CD4-positive, alpha-beta T cell (primary cell): ENCODE measurements at regions of chr5 and their contacts with region 1.

Region 1: DNA sequence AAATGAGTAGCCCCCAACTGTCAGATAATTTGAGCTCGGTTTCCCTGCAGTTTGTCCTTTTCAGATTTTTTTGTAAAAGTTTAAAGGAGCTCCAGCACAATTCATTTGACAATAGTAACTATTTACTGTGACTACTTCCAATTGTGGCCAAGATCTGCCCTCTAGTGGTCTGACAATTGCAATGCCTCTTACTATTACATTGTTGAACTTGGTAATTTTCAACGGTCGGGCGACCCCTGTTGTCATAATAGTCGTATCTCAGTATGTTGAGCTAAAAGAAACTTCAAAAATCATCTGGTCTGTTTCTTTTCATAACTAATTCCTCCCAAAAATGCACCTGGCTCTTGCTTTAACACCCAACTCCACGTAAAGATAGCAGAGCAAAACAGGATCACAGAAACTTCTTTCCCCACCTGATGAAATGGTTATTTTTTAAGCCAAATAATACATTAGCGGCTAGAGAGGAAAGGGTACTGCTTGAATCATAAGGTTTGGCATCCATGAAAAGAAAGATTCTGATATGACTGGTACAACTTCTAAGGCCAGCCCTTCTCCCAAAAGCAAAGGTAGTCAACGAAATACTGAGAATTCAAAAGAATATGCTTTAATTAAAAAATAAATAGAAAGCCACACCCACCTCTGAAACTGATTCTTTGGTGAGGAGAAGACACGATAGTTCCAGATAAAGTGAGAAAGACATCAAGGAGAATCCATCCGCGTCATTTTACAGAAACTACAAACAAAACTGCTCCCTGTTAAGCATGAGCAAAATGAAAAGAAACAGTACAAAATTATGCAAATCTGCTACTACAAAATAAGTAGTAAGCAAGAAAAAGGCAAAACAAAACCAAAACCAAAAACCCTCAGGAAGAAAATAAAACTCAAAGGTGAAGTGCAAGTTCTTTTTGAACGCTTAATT is 76.9 kb upstream of the HTR4 start:
- DNase-seq: peak; percentile 27 to 85 (median 48)
- ATAC-seq: peak; percentile 95
- H3K4me3 ChIP-seq: peak overlapping the region; percentile 24
- H3K4me3 Mint-ChIP-seq: peak overlapping the region; percentile 57
- H3K27ac ChIP-seq: no peak overlapping the region
- H3K27ac Mint-ChIP-seq: no peak overlapping the region
- H3K4me1 ChIP-seq: no peaks in the 10 kb centered on the region
- H3K4me1 Mint-ChIP-seq: peaks cover 5% of the 10 kb centered on the region
- H3K27me3 ChIP-seq: no peaks in the 10 kb centered on the region
- H3K27me3 Mint-ChIP-seq: peaks cover 11% of the 10 kb centered on the region
- CTCF ChIP-seq: peak; percentile 98

Region 2: DNA sequence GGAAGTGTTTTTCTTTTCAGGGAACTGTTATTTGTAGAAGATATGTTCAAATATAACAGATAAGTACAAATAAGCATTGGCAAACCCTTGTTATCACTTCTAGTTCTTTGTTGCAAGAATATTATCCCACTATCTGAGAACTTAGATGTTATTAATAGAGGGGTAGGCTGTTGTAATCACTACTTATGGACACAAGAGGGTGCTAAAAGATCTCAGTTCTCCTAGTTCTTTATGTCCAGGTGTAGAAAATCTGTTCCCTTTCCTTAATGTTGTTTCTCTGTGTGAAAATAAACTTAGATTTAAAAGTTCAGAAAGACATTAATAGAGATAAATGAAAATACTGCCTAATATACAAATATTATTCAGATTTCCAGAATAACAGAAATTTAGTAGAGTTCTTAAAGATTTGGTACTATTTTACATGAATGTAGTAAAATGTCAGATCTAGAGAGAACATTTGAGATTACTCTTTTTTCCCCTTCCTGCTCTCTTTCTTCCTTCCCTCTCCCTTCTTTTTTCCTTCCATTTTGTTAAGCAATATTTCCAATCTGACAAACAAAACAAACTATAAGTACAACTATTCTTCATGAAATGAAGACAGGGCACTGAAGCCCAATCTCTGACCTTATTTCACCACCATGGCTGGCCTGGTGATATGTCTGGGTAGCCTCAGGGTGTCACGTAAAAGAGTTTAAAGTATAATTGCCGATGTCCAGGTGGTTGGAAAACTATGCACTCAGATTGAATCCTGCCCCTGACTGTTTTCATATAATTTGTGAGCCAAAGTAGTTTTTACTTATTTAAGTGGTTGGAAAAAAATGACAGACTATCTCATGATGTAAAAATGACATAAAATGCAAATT is 781.3 kb before region 1 on chr5:
- CTCF ChIA-PET with region 1: no interaction called
- POLR2A ChIA-PET with region 1: no interaction called
- intact Hi-C with region 1: loop called in 1 of 2 experiments (anchors 1 kb)
- DNase-seq: peak in 1 of 14 experiments; percentile 15
- ATAC-seq: no peak
- H3K4me3 ChIP-seq: no peak overlapping the region
- H3K4me3 Mint-ChIP-seq: no peak overlapping the region
- H3K27ac ChIP-seq: no peak overlapping the region
- H3K27ac Mint-ChIP-seq: no peak overlapping the region
- H3K4me1 ChIP-seq: no peaks in the 10 kb centered on the region
- H3K4me1 Mint-ChIP-seq: no peaks in the 10 kb centered on the region
- H3K27me3 ChIP-seq: no peaks in the 10 kb centered on the region
- H3K27me3 Mint-ChIP-seq: no peaks in the 10 kb centered on the region
- CTCF ChIP-seq: no peak

Region 3: DNA sequence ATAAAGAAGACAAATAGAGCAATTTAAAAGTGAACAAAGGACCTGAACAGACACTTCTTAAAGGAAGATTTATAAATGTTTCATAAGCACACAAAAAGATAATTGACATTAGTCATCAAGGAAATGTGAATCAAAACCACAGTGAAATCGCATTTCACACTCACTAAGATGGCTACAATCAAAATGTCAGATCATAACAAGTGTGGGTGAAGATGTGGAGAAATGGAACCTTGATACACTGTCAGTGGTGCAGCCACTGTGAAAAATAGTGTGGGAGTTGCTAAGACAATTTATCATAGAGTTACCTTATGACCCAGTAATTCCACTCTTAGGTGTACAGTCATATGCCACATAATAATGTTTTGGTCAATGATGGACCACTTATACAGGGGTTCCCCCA is 22.3 kb before region 1 on chr5:
- CTCF ChIA-PET with region 1: interaction called, 14 read pairs
- POLR2A ChIA-PET with region 1: no interaction called
- intact Hi-C with region 1: no loop called
- DNase-seq: no peak
- ATAC-seq: no peak
- H3K4me3 ChIP-seq: no peak overlapping the region
- H3K4me3 Mint-ChIP-seq: no peak overlapping the region
- H3K27ac ChIP-seq: no peak overlapping the region
- H3K27ac Mint-ChIP-seq: no peak overlapping the region
- H3K4me1 ChIP-seq: no peaks in the 10 kb centered on the region
- H3K4me1 Mint-ChIP-seq: no peaks in the 10 kb centered on the region
- H3K27me3 ChIP-seq: no peaks in the 10 kb centered on the region
- H3K27me3 Mint-ChIP-seq: peaks cover 6% of the 10 kb centered on the region
- CTCF ChIP-seq: no peak

Region 4: DNA sequence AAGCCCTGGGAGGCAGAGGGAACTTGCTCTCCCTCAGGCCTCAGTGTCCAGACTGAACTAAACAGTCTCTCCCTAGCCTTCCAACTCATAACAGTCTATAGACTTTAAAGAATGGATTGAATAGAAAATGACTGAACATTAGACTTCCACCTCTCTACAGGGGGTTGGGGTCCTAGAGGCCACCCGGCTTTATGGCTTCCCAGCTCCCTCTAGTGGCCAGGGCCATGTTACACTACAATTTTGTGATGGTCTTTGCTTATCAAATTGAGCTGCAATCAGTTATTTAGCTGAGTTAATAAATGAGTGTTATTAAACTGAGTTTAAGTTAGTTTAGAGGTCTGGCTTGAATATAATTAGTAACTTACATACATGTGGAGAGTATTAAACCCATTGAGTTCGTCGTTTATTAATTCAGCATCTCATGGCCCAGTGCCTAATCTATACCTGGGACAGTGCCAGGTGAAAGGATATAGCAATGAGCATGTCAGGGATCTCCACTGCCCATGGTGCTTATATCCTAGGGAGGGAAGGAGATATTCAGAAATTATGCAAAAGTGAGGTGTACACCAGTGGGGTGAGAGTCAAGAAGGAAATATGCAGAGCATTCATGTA is 226.5 kb after region 1 on chr5:
- CTCF ChIA-PET with region 1: interaction called, 4 read pairs
- POLR2A ChIA-PET with region 1: no interaction called
- intact Hi-C with region 1: loop called in 1 of 2 experiments (anchors 2 kb)
- DNase-seq: peak in 13 of 14 experiments; percentile 6 to 63 (median 25)
- ATAC-seq: no peak
- H3K4me3 ChIP-seq: no peak overlapping the region
- H3K4me3 Mint-ChIP-seq: no peak overlapping the region
- H3K27ac ChIP-seq: no peak overlapping the region
- H3K27ac Mint-ChIP-seq: no peak overlapping the region
- H3K4me1 ChIP-seq: no peaks in the 10 kb centered on the region
- H3K4me1 Mint-ChIP-seq: no peaks in the 10 kb centered on the region
- H3K27me3 ChIP-seq: no peaks in the 10 kb centered on the region
- H3K27me3 Mint-ChIP-seq: no peaks in the 10 kb centered on the region
- CTCF ChIP-seq: peak; percentile 72

Region 5: DNA sequence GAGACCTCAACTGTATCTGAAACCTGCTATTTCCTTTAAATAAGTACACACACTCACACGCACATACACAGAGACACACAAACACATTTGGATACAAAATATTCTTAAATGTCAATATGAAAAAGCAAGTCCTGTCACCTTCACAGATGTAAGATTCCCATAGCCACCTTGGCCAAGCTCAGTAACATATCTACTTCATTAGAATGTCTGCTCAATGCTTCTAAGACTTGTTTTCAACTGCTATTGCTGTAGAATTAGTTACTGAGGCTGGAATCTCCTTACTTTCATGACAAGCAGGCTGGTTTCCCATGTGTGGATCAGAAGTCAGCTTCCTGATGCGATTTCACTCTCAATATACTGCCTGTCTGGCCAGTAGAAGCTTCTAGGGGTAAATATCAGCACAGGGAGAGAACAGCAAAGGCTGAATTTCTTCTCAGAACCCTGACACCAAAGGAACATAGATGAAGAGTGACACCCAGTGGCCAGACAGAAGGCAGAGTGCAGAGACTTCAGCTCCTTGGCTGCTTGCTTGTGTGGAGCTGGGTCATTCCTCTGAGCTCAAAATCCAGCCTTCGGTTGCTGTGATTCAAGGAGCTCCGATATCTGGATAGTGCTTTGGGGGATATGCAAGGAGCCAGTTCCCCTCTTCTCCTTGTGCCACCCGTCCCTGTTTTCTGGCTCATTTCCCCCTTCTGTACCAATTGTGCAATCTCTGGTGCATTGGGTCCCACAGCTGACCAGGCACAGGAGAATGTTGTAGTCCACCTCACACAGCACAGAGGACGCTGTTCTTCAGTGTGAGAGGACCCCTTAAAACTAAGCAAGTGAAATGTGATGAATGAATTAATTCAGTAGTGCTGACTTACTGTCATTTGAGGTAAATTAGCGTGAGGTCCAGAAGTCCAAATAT is 383.5 kb after region 1 on chr5:
- CTCF ChIA-PET with region 1: interaction called, 8 read pairs
- POLR2A ChIA-PET with region 1: no interaction called
- intact Hi-C with region 1: loop called (anchors 2 to 5 kb)
- DNase-seq: peak in 12 of 14 experiments; percentile 7 to 68 (median 16)
- ATAC-seq: peak; percentile 32
- H3K4me3 ChIP-seq: no peak overlapping the region
- H3K4me3 Mint-ChIP-seq: no peak overlapping the region
- H3K27ac ChIP-seq: no peak overlapping the region
- H3K27ac Mint-ChIP-seq: no peak overlapping the region
- H3K4me1 ChIP-seq: no peaks in the 10 kb centered on the region
- H3K4me1 Mint-ChIP-seq: no peaks in the 10 kb centered on the region
- H3K27me3 ChIP-seq: peaks cover 4 to 28% of the 10 kb centered on the region in 2 experiments
- H3K27me3 Mint-ChIP-seq: peaks cover 37% of the 10 kb centered on the region
- CTCF ChIP-seq: peak; percentile 59